ENCODE measurements at regions of chr6 and their contacts with region 1.

Region 1: GRCh38 chr6:135183532-135184440 is 2.7 kb downstream of the MYB start:
- DNase-seq: peak; percentile 77
- H3K4me3 Mint-ChIP-seq: peak overlapping the region; percentile 97
- H3K27ac Mint-ChIP-seq: peak overlapping the region; percentile 81
- H3K4me1 Mint-ChIP-seq: peaks cover 47% of the 10 kb centered on the region
- H3K27me3 Mint-ChIP-seq: no peaks in the 10 kb centered on the region

Region 2: DNA sequence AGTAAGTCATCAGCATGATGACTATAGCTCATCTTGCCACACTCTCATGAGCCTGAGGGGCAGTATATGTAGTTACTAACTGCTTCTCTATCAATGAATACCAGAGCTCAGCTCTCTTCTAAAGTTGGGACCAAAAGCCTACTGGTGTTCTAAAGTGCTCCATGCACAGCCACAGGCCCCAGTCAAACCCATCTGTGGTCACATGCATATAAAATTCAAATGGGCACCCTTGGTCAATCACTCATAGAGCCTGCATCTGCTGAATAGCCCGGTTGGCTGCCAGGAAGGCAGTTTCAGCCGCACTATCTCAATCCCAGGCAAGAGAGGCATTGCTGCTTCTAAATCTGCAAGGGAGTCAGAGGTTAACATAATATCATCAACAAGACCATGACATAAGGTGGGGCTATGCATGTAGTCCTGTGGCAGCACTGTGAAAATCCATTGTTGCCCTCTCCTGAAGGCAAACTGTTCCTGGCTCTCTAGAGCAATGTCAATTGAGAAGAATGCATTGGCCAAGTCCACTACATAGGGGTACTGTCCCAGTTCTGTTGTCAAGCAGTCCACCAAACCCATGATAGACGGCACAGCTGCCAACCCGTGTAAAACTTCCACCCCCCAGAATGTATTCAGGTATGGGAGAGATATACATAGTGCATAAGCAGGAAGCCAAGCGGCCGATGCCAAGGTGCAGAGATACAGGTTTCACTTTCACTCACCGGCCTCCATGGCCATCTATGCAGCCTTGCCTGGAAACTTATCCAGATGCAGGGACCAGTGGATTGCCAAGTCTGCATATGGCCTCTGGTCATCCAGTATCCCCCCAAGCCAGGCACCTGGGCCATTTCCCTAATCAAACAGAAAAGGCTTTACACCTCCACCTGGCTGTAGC is 310.0 kb before region 1 on chr6:
- intact Hi-C with region 1: no loop called
- DNase-seq: no peak
- H3K4me3 Mint-ChIP-seq: no peak overlapping the region
- H3K27ac Mint-ChIP-seq: no peak overlapping the region
- H3K4me1 Mint-ChIP-seq: peaks cover 18% of the 10 kb centered on the region
- H3K27me3 Mint-ChIP-seq: peaks cover 2% of the 10 kb centered on the region

Region 3: DNA sequence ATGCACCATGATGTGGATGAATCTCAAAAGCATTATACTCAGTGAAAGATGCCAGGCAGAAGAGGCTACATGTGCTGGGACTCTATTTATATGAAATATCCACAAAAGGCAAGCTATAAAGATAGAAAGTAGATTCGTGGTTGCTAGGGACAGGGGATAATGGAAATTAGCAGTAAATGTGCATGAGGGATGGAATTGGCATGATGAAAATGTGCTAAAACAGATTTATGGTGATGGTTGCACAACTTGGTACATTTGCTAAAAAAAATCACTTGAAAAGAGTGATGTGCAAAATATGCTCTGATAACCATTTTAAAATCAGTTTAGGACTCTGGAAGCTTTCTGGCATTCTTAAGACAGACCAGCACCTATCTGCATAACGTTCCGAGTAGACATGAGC is 295.5 kb before region 1 on chr6:
- intact Hi-C with region 1: no loop called
- DNase-seq: no peak
- H3K4me3 Mint-ChIP-seq: no peak overlapping the region
- H3K27ac Mint-ChIP-seq: no peak overlapping the region
- H3K4me1 Mint-ChIP-seq: no peaks in the 10 kb centered on the region
- H3K27me3 Mint-ChIP-seq: peaks cover 22% of the 10 kb centered on the region

Region 4: DNA sequence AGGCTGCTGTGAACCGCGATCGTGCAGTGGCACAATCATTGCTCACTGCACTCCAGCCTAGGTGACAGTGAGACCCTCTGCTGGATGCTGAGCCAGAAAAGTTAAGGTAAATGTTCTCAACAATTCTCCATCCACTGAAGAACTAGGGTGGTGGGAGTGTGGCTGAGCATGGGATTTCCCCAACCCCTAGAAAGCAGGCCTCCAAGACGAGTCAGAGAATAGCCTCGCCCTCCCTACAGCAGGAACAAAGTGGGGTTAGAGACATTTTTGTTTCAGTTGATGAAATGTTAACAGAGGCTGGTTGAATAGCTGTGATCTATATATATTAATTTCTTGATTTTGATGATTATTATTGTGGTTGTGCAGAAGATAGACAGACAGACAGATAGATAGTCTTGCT is 227.8 kb before region 1 on chr6:
- intact Hi-C with region 1: loop called (anchors 1 kb)
- DNase-seq: no peak
- H3K4me3 Mint-ChIP-seq: no peak overlapping the region
- H3K27ac Mint-ChIP-seq: no peak overlapping the region
- H3K4me1 Mint-ChIP-seq: peaks cover 20% of the 10 kb centered on the region
- H3K27me3 Mint-ChIP-seq: no peaks in the 10 kb centered on the region

Region 5: DNA sequence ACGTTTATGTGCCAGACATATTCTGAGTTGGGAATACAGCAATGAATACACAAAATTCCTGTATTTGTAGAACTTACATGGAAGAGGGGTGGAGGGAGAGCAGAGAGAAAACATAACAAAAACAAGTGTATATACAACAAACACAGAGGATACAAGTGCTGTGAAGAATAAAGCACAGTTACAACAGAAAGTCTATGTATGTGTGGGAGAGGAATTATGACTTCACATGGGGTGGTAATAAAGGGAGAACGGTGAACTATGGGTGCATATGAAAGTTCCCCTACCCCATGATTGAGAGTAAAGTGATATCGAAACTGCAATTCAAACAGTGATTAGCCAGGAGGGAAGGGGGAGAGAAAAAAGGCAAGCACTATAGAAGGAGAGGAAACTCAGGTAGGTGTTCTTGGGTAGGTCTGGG is 153.7 kb before region 1 on chr6:
- intact Hi-C with region 1: loop called (anchors 1 kb)
- DNase-seq: peak; percentile 12
- H3K4me3 Mint-ChIP-seq: peak overlapping the region; percentile 44
- H3K27ac Mint-ChIP-seq: peak overlapping the region; percentile 84
- H3K4me1 Mint-ChIP-seq: peaks cover 67% of the 10 kb centered on the region
- H3K27me3 Mint-ChIP-seq: no peaks in the 10 kb centered on the region

Region 6: DNA sequence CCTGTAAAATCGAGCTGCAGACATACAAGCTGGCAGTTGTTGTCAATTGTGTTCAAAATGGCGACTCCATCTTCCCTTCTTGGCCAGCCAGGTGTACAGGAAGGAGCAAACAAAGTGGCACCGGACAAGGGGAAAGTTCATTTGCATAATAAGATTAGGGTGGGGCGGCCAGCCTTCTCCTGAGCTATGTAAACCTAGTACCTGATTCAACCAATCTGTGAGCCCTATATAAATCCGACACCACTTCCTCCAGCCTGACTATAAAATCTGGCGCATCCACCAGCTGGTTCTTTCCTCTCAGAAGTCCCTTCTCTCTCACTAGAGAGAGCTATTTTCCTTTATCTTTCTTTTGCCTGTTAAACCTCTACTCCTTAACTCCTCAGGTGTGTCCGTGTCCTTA is 121.1 kb before region 1 on chr6:
- intact Hi-C with region 1: no loop called
- DNase-seq: no peak
- H3K4me3 Mint-ChIP-seq: no peak overlapping the region
- H3K27ac Mint-ChIP-seq: no peak overlapping the region
- H3K4me1 Mint-ChIP-seq: peaks cover 12% of the 10 kb centered on the region
- H3K27me3 Mint-ChIP-seq: no peaks in the 10 kb centered on the region

Region 7: DNA sequence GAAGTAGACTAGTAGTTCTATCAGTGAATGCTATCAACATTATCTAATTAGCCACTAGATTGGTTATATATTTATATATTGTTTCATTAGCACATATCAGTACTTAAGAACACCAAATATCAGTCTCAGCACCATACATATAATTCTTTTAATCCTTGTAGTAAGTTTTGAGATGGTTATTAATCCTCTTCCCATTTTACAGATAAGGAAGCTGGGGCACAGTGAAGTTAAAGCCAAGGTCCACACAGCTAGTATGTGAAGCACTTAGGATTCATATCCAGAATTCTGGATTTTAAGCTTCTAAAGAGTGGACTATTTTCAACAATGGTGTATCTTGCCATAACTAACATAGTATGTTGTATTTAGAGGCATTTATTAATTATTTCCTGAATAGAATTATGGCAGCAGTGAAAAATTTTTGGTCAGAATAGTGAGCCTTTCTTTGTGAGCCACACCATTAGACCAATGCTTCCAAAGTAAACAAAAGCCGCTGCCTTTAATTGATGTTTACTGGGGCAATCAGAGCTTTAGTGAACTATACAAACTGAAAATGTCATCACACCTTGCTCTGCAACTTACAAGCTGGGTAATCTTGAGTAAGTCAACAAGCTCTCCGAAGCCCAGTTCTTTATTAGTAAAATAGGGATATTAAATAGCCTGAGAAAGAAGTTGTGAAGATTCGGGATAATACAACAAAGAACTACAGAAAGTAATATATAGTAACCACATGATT is 87.2 kb before region 1 on chr6:
- intact Hi-C with region 1: no loop called
- DNase-seq: no peak
- H3K4me3 Mint-ChIP-seq: no peak overlapping the region
- H3K27ac Mint-ChIP-seq: no peak overlapping the region
- H3K4me1 Mint-ChIP-seq: peaks cover 50% of the 10 kb centered on the region
- H3K27me3 Mint-ChIP-seq: peaks cover 2% of the 10 kb centered on the region

Region 8: DNA sequence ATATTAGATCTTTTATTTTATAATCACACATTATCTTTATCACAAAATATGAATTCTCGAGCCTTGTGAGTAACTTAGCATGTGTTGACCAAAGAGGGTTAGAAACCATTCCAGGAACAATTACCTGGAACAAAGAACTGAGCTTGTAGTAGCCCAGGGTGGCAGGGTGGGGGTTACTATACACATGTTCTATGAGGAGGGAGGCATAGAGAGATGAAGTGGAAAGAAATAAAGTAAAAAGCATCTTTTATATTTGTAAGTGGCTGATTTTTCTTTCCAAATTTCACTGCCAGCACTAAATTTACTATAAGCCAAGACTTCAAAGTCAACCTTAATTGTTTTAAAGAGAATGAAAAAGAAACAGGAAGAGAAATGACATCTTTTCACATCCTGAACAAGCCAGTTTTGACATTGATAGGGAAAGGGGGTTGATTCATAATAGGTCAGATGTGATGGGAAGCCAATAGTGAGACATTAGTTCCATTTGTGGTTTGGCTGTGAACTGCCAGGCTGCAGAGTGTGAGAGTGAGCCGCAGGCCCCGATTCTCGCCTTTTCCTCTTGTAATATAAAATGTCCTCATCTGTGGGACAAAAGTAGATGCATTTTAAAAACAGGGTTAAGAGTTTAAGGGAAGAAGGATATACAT is 55.4 kb before region 1 on chr6:
- intact Hi-C with region 1: loop called (anchors 1 kb)
- DNase-seq: peak; percentile 53
- H3K4me3 Mint-ChIP-seq: peak overlapping the region; percentile 66
- H3K27ac Mint-ChIP-seq: peak overlapping the region; percentile 97
- H3K4me1 Mint-ChIP-seq: peaks cover 63% of the 10 kb centered on the region
- H3K27me3 Mint-ChIP-seq: no peaks in the 10 kb centered on the region

Region 9: GRCh38 chr6:135195522-135195921 is 11.7 kb after region 1 on chr6:
- intact Hi-C with region 1: loop called (anchors 1 kb)
- DNase-seq: no peak
- H3K4me3 Mint-ChIP-seq: peak overlapping the region; percentile 45
- H3K27ac Mint-ChIP-seq: peak overlapping the region; percentile 25
- H3K4me1 Mint-ChIP-seq: peaks cover 58% of the 10 kb centered on the region
- H3K27me3 Mint-ChIP-seq: no peaks in the 10 kb centered on the region

Region 10: DNA sequence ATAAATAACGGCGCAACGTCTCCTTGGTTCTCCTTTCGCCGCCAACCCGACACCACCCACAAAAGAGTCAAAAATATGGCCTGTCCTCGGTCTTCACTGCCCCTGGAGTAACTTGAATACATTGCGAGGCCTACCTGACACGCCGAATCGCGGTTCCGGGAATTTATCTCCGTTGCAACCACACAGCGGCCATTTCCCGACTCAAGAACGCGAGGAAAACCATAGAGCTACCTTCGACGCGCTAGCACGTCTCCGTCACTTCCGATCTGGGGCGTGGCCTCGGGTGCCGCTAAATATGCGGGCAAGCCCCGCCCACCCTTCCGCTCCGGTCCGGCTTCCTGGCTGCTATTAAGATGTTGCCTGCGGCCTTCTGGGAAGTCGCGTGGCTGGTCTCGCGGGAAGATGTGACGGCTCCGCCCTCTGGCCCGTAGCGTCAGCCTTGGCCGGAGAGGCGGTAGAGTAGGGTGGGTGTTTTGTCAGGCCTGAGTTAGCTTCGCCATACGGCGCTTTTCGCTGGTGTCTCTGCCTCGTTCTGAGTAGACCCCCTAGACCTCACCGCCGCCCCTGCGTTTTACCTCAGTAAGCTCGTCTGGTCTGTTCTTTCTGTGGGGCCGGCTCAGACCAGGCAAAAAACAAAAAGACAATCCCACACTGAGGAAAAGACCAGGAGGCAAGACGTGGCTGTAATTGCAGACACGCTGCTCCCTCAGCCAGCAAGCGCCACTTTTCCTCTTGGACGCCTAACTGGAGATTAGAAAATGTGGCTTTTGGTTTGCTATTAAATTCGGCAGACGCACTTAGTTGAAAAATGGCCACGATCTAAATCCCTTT is 1106.0 kb after region 1 on chr6 and contains the start of gene BCLAF1:
- intact Hi-C with region 1: loop called (anchors 2 kb)
- DNase-seq: peak; percentile 100
- H3K4me3 Mint-ChIP-seq: peak within 1 kb of the TSS; percentile 98
- H3K27ac Mint-ChIP-seq: peak within 1 kb of the TSS; percentile 99
- H3K4me1 Mint-ChIP-seq: peaks cover 48% of the 10 kb centered on the region
- H3K27me3 Mint-ChIP-seq: peaks cover 2% of the 10 kb centered on the region
- total RNA-seq, gene BCLAF1: 233 and 237 TPM in 2 replicates